ENCODE measurements at regions of chr9 and their contacts with region 1.

Region 1: DNA sequence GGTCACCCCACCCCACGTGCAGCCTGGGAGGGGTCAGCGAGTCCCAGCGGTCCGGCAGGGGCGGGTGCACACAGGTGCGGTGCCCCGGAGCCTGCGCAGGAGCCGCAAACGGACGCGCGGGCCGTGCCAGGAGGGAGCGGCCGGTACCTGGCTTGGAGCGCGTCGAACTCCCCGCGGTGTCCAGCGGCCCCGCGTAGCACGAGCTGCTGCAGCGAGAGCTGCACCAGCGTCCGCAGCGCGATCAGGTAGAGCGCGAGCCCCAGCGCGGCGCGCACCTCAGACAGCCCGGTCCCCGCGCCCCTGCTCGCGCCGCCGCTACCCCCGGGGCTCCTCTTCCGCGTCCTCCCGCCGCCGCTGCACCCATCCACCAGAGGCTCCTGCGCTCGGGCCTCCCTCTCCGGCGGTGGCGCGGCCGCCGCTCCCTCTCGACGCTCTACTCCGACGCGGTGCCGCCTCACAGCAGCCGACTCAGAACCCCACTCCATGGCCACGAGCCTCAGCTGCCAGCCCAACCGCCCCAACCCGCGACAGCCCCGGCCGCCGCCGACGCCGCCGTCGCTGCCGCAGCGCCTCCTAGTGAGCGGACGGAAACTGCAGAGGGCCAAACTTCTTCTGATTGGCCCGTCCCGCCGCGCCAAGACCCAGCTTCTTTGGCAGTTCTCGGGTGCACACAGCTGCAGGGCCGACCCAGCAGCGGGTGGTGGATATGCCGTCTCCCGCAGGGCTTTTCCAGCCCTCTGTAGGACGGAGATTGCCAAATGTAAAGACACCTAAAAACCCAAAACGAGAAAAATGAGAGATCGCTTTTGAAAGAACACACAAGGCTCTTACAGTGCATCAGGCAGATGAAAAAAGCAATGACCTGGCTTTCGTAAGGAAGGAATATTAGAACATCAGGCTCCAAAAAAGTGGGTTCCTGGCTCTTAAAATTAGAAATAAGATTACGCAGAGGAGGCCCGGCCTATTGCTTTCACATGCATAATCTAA is at the start of gene ERMP1:
- DNase-seq: peak; percentile 78 to 94 (median 87)
- ATAC-seq: peak; percentile 89 to 93 (median 90)
- H3K4me3 ChIP-seq: peak within 1 kb of the TSS; percentile 69 to 74
- H3K4me3 Mint-ChIP-seq: peak within 1 kb of the TSS; percentile 84 to 93 (median 91)
- H3K27ac ChIP-seq: no peak within 1 kb of the TSS
- H3K27ac Mint-ChIP-seq: peak within 1 kb of the TSS; percentile 96
- H3K4me1 ChIP-seq: peaks cover 16 to 21% of the 10 kb centered on the region in 2 experiments
- H3K4me1 Mint-ChIP-seq: peaks cover 47 to 60% (median 50%) of the 10 kb centered on the region in 3 donors
- H3K27me3 ChIP-seq: no peaks in the 10 kb centered on the region
- H3K27me3 Mint-ChIP-seq: no peaks in the 10 kb centered on the region
- total RNA-seq, gene ERMP1: 12.1 to 23.5 (median 17.7) TPM

Region 2: GRCh38 chr9:5437254-5438216 is 395.3 kb before region 1 on chr9 and contains the start of gene PLGRKT:
- CTCF ChIA-PET with region 1: no interaction called
- POLR2A ChIA-PET with region 1: no interaction called
- DNase-seq: peak; percentile 76 to 94 (median 88)
- ATAC-seq: peak; percentile 95 to 99 (median 98)
- H3K4me3 ChIP-seq: peak within 1 kb of the TSS; percentile 77 to 84
- H3K4me3 Mint-ChIP-seq: peak within 1 kb of the TSS; percentile 89 to 95 (median 91)
- H3K27ac ChIP-seq: peak within 1 kb of the TSS; percentile 93
- H3K27ac Mint-ChIP-seq: peak within 1 kb of the TSS; percentile 98 to 99
- H3K4me1 ChIP-seq: peaks cover 15 to 22% of the 10 kb centered on the region in 2 experiments
- H3K4me1 Mint-ChIP-seq: peaks cover 28 to 37% (median 37%) of the 10 kb centered on the region in 3 donors
- H3K27me3 ChIP-seq: no peaks in the 10 kb centered on the region
- H3K27me3 Mint-ChIP-seq: no peaks in the 10 kb centered on the region
- total RNA-seq, gene PLGRKT: 15.4 to 21.3 (median 19.3) TPM

Region 3: GRCh38 chr9:5958273-5958672 is 125.4 kb after region 1 on chr9:
- CTCF ChIA-PET with region 1: no interaction called
- POLR2A ChIA-PET with region 1: interaction called in 1 of 2 experiments, 11 read pairs
- DNase-seq: no peak
- ATAC-seq: no peak
- H3K4me3 ChIP-seq: no peak overlapping the region
- H3K4me3 Mint-ChIP-seq: no peak overlapping the region
- H3K27ac ChIP-seq: no peak overlapping the region
- H3K27ac Mint-ChIP-seq: no peak overlapping the region
- H3K4me1 ChIP-seq: no peaks in the 10 kb centered on the region
- H3K4me1 Mint-ChIP-seq: peaks cover 9 to 16% (median 14%) of the 10 kb centered on the region in 3 donors
- H3K27me3 ChIP-seq: no peaks in the 10 kb centered on the region
- H3K27me3 Mint-ChIP-seq: no peaks in the 10 kb centered on the region

Region 4: DNA sequence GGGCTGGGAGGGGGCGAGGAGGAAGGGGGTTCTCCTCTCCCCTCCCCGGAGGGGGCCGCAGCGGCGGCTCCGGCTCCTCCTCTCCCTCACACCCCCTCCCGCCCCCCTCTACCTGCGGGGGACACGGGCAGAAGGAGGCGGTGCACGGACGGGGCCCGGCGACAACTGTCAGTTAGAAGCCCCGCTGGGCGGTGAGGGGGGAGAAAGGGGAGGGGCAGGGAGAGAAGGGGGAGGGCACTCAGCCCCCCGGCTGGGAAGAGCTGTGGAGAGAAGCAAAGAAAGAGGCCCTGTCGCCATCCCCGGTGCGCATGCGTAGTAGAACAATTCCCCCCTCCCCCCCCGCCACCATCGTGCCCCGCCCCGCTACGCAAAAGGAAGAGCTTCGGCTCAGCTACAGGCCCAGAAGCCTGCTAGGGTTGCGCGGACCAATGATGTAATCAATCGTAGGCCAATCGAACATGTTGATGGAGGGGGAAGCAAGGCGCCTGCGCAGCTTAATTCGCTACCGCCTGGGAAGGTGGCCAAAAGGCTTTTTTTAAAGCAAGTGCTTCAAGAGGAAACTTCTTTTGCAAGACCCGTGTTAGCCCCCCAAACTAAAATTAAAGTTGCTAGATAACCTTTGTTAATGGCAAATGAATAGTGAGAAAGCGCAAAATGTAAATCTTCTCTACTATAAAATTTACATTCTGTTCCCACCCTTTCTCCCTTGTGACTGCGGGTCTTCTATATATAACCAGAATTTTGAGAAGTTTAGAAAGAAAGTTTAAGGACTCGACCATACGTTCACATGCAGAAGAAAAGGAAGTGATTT is 175.5 kb after region 1 on chr9:
- CTCF ChIA-PET with region 1: interaction called in 1 of 2 experiments, 11 read pairs
- POLR2A ChIA-PET with region 1: interaction called in 1 of 2 experiments, 3 read pairs
- DNase-seq: peak; percentile 78 to 98 (median 95)
- ATAC-seq: peak; percentile 72 to 77 (median 73)
- H3K4me3 ChIP-seq: peak overlapping the region in 1 of 2 donors; percentile 91
- H3K4me3 Mint-ChIP-seq: peak overlapping the region; percentile 77 to 95 (median 77)
- H3K27ac ChIP-seq: peak overlapping the region; percentile 95
- H3K27ac Mint-ChIP-seq: peak overlapping the region; percentile 85 to 88
- H3K4me1 ChIP-seq: peaks cover 13 to 16% of the 10 kb centered on the region in 2 experiments
- H3K4me1 Mint-ChIP-seq: peaks cover 49 to 70% (median 60%) of the 10 kb centered on the region in 3 donors
- H3K27me3 ChIP-seq: no peaks in the 10 kb centered on the region
- H3K27me3 Mint-ChIP-seq: no peaks in the 10 kb centered on the region

Region 5: DNA sequence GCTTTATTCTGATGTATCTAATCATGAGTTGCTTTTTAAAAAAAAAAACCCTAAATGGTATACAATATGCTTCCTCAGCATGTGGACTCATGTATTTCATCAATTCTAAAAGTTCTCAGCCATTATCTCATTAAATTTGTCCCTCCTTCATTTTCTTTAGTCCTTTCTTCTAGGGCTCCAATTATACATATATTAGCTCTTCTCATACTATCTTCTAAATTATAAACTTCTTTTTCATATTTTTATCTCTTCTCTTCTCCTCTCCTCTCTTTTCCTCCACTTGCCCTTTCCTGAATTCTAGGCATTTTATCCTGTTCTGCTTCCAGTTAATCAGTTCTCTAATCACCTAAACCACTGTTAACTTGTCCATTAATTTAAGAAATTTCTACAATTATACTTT is 327.7 kb after region 1 on chr9:
- CTCF ChIA-PET with region 1: no interaction called
- POLR2A ChIA-PET with region 1: no interaction called
- DNase-seq: no peak
- ATAC-seq: no peak
- H3K4me3 ChIP-seq: no peak overlapping the region
- H3K4me3 Mint-ChIP-seq: no peak overlapping the region
- H3K27ac ChIP-seq: no peak overlapping the region
- H3K27ac Mint-ChIP-seq: no peak overlapping the region
- H3K4me1 ChIP-seq: no peaks in the 10 kb centered on the region
- H3K4me1 Mint-ChIP-seq: no peaks in the 10 kb centered on the region
- H3K27me3 ChIP-seq: peaks cover 0 to 3% of the 10 kb centered on the region in 2 experiments
- H3K27me3 Mint-ChIP-seq: peaks cover 3 to 14% of the 10 kb centered on the region in 2 donors